AG04449 (cell line): ENCODE measurements at regions of chr2 and their contacts with region 1.

Region 1: DNA sequence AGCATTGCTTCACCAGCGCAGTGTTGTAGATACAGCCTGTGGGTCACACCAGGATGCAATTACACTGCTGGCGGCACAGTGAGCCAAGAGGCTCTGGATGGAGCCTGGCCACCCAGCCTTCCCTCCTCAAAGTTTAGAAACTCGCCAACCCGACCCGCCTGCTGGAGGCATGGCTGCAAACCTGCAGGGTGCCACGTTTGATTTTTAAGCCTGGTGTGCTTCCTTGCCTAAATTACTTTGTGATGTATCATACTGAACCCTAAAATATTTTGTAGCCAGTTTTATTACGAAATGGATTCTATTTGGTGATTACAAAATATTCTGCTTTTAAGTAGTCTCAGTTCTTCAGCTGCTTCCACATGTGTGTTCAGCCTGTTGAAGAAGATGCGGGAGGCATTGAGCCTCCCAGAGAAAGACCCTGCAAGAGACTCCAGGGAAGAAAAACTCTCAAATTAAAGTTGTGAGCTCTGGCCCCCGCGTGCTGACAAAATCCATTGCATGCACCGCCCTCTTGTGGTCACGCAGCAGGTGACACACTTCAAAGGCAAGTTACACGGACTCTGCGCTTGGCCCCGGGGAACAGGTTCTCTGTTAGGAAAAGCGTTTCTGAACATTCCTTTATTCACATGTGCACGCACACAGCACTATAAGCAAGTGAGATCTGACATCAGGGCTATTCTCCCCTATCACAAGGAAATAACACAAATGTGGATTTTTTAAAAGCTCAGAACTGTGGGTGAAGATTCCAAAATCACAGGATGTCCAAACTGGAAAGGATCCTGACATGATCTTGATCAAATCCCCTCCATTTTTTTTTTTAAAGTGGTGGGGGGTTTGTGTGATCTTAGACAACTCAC is 63.0 kb upstream of the TWIST2 start:
- DNase-seq: peak; percentile 16
- H3K4me3 ChIP-seq: no peak overlapping the region
- CTCF ChIP-seq: peak; percentile 88

Region 2: GRCh38 chr2:238362626-238363025 is 422.3 kb before region 1 on chr2:
- CTCF ChIA-PET with region 1: interaction called, 20 read pairs
- POLR2A ChIA-PET with region 1: no interaction called
- DNase-seq: no peak
- H3K4me3 ChIP-seq: no peak overlapping the region
- CTCF ChIP-seq: no peak

Region 3: DNA sequence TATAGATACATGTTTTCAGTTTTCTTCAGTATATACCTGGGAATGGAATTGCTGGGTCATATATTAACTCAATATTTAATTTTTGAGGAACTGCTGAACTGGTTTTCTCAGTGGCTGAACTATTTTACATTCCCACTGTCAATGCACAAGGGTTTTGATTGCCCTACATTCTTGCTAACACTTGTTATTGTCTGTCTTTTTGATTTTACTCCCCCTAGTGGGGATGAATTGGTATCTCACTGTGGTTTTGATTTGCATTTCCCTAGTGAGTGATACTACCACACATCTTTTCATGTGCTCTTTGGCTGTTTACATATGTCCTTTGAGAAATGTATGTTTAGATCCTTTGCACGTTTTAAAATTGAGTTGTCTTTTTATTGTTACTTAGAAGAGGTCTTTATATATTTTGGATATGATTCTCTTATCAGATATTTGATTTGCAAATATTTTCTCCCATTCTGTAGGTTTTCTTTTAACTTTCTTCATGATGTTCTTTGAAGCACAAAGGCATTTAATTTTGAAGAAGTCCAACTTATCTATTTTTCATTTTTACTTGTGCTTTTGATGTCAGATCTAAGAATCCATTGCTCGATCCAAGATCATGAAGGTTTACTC is 322.0 kb before region 1 on chr2:
- CTCF ChIA-PET with region 1: interaction called, 10 read pairs
- POLR2A ChIA-PET with region 1: no interaction called
- DNase-seq: no peak
- H3K4me3 ChIP-seq: no peak overlapping the region
- CTCF ChIP-seq: peak; percentile 33

Region 4: DNA sequence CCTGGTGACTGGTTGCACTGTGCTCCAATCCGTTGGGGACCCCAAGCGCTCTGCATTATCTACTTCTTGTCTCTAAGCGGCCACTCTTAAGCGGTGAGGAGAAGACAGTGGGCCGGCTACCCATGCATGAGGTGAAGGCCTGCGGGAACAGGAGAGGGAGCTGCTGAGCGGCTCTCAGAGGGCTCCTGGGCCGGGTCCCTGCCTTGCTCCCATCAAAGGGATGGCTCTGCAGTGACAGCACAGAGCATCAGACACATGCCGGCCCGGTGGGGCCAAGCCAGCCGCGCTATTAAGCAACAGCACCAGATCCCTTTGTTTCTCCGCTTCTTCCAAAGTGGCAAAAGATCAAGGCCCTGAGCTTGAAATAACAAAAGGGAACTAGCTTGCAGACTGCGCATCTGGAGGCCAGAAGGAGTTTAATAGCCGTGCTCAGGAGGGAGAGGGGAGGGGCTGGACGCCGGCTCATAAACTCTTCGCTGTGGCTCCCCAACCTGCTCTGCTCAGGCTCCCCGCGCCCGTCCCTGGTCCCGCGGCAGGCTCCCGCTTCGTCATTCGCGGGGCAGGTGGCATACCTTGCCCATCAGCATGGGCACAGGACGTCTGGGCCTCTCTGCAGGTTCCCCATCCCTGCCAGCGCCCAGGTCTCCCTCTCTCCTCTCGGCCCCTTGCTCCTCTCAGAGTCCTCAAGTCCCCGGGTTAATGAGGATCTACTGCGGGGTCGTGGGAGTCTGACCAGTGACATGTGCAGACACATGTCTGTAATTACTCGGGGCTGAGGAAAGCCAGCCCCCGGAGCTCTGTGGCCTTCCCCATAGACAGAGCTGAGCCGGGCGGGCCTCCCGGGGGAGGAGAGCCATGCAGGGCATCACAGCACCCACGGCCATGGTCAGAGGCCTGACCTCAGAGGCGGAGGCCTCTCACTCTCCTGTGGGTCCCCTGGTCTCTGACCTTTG is 261.5 kb before region 1 on chr2:
- CTCF ChIA-PET with region 1: interaction called, 165 read pairs
- POLR2A ChIA-PET with region 1: interaction called, 4 read pairs
- DNase-seq: no peak
- H3K4me3 ChIP-seq: no peak overlapping the region
- CTCF ChIP-seq: peak; percentile 66

Region 5: DNA sequence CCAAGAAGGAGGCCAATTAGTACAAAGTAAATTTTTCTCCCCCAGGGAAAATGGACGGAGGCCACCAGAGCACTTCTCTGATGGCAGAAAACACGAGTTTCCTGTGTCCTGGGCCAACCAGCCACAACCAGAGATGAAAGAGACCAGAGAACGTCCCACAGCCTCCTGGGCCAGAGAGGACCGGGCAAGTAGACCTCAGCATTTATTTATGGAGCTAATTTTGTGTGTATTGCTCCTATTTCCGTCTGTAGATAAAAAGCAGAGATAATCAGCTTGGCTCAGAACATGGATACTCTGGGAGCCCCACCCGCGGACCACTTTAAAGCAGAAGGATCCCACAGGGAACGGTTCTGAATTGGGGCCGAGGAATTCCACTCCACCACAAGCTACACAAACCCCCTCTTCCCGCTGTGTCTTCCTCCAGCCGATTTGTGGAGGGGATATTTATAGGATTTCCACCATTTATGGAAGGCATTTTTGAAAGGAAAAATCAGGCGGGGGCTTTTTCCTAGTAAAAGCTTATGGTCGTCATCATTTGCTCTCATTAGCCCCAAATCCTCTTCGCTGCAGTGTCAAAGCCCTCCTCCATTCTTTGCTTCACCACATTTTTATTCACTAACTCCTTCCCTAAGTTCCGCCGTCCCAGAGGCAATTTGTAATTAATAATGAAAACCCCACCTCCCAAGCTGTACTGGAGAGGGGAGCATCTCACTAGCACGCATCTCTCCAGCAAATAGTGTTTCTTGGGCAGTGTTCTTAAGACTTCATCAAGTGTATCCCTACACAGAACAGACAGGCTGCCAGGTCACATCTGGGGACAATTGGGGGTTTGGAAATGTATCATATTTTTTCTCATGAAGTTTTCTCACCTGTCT is 19.3 kb after region 1 on chr2:
- CTCF ChIA-PET with region 1: interaction called, 15 read pairs
- POLR2A ChIA-PET with region 1: no interaction called
- DNase-seq: no peak
- H3K4me3 ChIP-seq: no peak overlapping the region
- CTCF ChIP-seq: no peak

Region 6: GRCh38 chr2:238945433-238946150 is 160.7 kb after region 1 on chr2:
- CTCF ChIA-PET with region 1: interaction called, 10 read pairs
- POLR2A ChIA-PET with region 1: no interaction called
- DNase-seq: no peak
- H3K4me3 ChIP-seq: no peak overlapping the region
- CTCF ChIP-seq: peak; percentile 87

Region 7: DNA sequence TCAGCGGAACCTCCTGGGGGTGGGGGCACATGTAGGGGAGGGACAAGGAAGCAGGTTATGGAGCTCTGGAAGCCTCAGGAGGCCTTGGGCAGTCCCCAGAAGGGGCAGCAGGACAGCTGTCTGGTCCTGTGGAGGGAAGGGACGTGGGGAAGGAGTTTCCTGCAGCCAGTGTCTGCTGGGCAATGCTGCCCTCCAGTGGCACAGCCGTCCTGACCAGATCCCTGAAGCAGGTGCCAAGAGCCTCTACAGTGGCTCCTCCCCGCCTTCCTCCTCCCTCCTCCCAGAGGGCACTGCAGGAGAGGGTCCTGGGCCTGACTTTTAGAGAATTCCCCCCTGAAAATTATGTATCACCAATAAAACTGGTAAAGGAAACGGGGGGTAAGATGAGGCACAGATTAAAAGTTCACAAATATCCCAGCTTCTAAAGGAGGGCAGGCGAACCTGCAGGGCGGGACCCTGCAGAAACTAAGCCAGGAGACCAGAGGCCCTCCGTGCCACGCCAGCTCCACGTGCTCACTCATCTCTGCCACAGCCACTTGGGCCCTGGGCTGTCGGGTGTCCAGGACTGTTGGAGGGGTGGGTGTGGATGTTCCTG is 321.5 kb after region 1 on chr2:
- CTCF ChIA-PET with region 1: interaction called, 22 read pairs
- POLR2A ChIA-PET with region 1: no interaction called
- DNase-seq: peak; percentile 7
- H3K4me3 ChIP-seq: no peak overlapping the region
- CTCF ChIP-seq: peak; percentile 89